Mammary epithelial cell (primary cell): ENCODE measurements at regions of chr1 and their contacts with region 1.

Region 1: GRCh38 chr1:35769759-35770446 is at the start of gene CLSPN:
- DNase-seq: peak; percentile 93
- H3K4me3 ChIP-seq: peak within 1 kb of the TSS; percentile 81 to 92 (median 84)
- H3K27ac ChIP-seq: peak within 1 kb of the TSS; percentile 76
- H3K4me1 ChIP-seq: no peaks in the 10 kb centered on the region
- H3K27me3 ChIP-seq: no peaks in the 10 kb centered on the region
- CTCF ChIP-seq: no peak
- total RNA-seq, gene CLSPN: 2.3 to 29.4 TPM

Region 2: GRCh38 chr1:34786521-34787325 is 983.2 kb before region 1 on chr1:
- CTCF ChIA-PET with region 1: no interaction called
- dilution Hi-C with region 1: no loop called
- in situ Hi-C with region 1: no loop called
- intact Hi-C with region 1: loop called (anchors 5 kb)
- DNase-seq: peak; percentile 48
- H3K4me3 ChIP-seq: no peak overlapping the region
- H3K27ac ChIP-seq: peak overlapping the region; percentile 18
- H3K4me1 ChIP-seq: peaks cover 37% of the 10 kb centered on the region
- H3K27me3 ChIP-seq: no peaks in the 10 kb centered on the region
- CTCF ChIP-seq: peak; percentile 84

Region 3: DNA sequence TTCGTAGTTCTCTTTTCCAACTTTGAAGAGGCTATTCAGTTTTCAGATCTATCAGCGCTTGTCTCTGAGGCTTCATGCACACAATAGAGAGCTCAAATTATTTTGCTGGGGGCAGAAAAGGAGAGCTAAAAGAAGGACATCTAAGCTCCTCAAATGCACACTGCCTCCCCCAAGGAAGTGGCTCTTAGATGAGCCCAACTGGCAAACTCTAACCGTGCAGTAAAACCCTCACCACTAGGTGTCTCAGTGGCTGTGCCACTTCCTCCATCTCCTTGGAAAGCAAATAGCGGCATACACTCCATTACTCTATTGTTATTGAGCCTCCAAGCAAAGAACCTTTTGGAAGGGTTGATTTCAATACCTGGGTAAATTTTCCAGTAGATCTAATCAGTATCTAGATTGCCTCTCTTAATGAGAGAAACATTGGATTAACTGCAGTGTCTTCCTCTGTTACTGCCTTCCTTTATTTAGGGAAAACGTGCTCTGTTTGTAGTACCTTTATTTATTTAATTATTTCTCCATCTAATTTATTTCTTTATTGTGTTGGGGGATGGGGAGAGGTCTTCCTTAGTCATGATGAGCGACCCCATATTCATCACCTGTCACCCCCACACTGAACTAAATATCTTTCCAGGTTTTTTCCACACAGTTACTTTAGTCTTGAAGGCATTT is 567.7 kb before region 1 on chr1:
- CTCF ChIA-PET with region 1: no interaction called
- dilution Hi-C with region 1: no loop called
- in situ Hi-C with region 1: no loop called
- intact Hi-C with region 1: loop called (anchors 1 kb)
- DNase-seq: peak; percentile 70
- H3K4me3 ChIP-seq: no peak overlapping the region
- H3K27ac ChIP-seq: no peak overlapping the region
- H3K4me1 ChIP-seq: no peaks in the 10 kb centered on the region
- H3K27me3 ChIP-seq: no peaks in the 10 kb centered on the region
- CTCF ChIP-seq: peak; percentile 86 to 93

Region 4: DNA sequence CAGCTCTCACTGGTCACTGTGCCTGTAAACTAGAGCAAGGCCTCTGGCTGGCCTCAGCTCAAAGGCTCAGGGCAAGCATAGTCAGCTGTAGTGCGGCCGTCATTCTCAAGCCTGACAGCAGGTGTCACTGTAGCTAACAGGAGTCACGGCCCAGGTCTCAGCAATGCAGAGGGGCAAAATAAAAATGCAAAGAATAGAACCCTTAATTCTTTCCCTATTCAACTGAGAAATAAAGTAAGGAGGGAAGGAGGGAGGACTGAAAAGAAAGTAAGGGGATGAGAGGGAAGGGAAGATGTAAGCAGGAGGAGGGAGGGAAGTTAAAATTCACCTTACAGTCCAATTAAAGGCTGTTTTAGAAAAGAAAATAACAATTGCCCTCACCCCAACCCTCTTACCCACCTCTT is 318.8 kb before region 1 on chr1:
- CTCF ChIA-PET with region 1: no interaction called
- dilution Hi-C with region 1: no loop called
- in situ Hi-C with region 1: no loop called
- intact Hi-C with region 1: loop called (anchors 1 kb)
- DNase-seq: peak; percentile 59
- H3K4me3 ChIP-seq: no peak overlapping the region
- H3K27ac ChIP-seq: no peak overlapping the region
- H3K4me1 ChIP-seq: peaks cover 29% of the 10 kb centered on the region
- H3K27me3 ChIP-seq: peaks cover 2% of the 10 kb centered on the region
- CTCF ChIP-seq: peak; percentile 88 to 91

Region 5: GRCh38 chr1:35505908-35506798 is 263.8 kb before region 1 on chr1:
- CTCF ChIA-PET with region 1: no interaction called
- dilution Hi-C with region 1: no loop called
- in situ Hi-C with region 1: no loop called
- intact Hi-C with region 1: no loop called
- DNase-seq: peak; percentile 90
- H3K4me3 ChIP-seq: no peak overlapping the region
- H3K27ac ChIP-seq: no peak overlapping the region
- H3K4me1 ChIP-seq: peaks cover 16% of the 10 kb centered on the region
- H3K27me3 ChIP-seq: no peaks in the 10 kb centered on the region
- CTCF ChIP-seq: no peak

Region 6: GRCh38 chr1:35573198-35574090 is 196.5 kb before region 1 on chr1 and contains the start of gene TFAP2E:
- CTCF ChIA-PET with region 1: no interaction called
- dilution Hi-C with region 1: no loop called
- in situ Hi-C with region 1: loop called in 1 of 2 experiments (anchors 10 kb)
- intact Hi-C with region 1: loop called (anchors 1 kb)
- DNase-seq: peak; percentile 41
- H3K4me3 ChIP-seq: peak within 1 kb of the TSS; percentile 56 to 68 (median 62)
- H3K27ac ChIP-seq: no peak within 1 kb of the TSS
- H3K4me1 ChIP-seq: peaks cover 21% of the 10 kb centered on the region
- H3K27me3 ChIP-seq: no peaks in the 10 kb centered on the region
- CTCF ChIP-seq: no peak
- total RNA-seq, gene TFAP2E: 0.17 to 0.71 TPM

Region 7: DNA sequence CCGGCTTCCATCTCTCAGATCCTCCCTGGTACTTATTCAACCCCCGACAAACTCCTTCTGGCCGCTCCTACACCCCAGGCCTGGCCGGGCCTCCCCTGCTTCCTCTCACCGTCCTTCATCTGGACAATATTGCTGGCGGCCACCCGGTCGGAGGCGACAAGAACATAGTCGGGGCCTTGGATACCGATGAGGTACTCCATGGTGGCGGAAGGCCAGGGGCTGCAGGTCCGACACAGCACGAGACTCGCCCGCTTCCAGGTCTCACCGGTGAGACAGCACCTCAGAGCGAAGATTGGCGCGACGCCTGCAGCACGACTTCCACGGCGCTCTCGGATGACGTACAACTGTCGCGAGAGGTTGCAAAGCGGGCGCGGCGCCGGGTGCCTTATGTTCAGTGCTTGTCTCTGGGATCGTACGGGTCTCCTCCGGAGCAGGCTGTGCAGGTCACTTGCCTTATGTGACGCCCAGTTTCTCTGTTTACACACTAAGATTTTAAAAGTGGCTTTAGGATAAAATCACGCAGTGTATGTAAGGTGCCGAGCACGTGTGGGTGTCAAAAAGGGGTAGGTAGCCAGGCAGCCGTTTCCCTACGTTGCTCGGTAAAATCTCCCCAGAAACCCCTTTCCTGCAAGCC is 128.6 kb before region 1 on chr1 and contains the start of gene PSMB2:
- CTCF ChIA-PET with region 1: no interaction called
- dilution Hi-C with region 1: no loop called
- in situ Hi-C with region 1: no loop called
- intact Hi-C with region 1: loop called (anchors 1 kb)
- DNase-seq: peak; percentile 95
- H3K4me3 ChIP-seq: peak within 1 kb of the TSS; percentile 87 to 99 (median 99)
- H3K27ac ChIP-seq: peak within 1 kb of the TSS; percentile 98
- H3K4me1 ChIP-seq: peaks cover 14% of the 10 kb centered on the region
- H3K27me3 ChIP-seq: peaks cover 2% of the 10 kb centered on the region
- CTCF ChIP-seq: no peak
- total RNA-seq, gene PSMB2: 24.3 to 82.1 TPM

Region 8: DNA sequence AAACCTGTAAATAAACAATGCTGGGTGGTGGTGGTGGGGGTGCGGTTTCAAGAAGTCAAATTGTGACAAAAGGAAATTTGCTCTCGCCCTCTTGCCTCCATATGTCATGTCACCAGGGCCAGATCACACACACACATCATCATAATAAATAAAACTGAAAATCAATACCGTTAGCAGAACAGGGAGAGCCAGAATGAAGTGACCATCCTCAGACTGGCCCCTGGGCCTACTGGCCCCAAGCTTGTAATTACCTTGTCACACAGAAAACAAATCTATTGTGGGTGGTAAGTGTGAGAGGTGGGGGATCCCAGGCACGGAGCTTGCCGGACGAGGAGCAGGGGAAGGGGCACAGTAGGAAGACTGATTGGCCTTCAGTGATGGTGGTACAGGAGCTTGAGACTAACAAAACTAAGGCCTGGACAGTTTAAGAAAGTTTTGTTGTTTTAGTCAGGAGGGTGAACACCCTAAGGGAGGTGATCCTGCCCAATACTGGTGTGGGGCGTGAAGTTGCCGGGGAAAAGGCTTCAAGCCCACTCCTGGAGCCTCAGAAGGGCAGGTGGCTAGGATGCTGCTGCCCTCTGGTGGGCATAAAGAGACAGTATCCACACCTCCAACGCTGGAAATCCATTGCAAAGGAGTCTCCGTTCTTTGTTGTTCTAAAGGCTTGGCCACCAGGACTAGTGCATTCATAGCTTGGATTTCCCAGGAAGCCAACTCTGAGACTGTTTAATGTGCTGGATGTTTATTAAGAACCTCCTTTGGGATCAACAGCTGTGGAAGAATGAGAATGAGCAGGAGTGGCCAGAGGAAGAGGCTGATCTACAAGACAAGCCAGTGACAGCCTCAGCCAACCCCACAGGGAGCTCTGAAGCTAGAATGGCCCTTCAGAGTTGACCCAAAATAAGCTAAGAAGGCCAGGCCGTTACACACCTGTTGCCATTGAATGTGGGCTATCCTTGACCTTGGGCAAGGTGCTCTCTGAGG is 43.2 kb before region 1 on chr1:
- CTCF ChIA-PET with region 1: interaction called, 7 read pairs
- dilution Hi-C with region 1: no loop called
- in situ Hi-C with region 1: no loop called
- intact Hi-C with region 1: loop called (anchors 1 kb)
- DNase-seq: peak; percentile 22
- H3K4me3 ChIP-seq: no peak overlapping the region
- H3K27ac ChIP-seq: no peak overlapping the region
- H3K4me1 ChIP-seq: no peaks in the 10 kb centered on the region
- H3K27me3 ChIP-seq: no peaks in the 10 kb centered on the region
- CTCF ChIP-seq: peak; percentile 87 to 89